Dorsolateral prefrontal cortex (tissue), 120 donors: ENCODE measurements at regions of chr1 and their contacts with region 1.

Region 1: DNA sequence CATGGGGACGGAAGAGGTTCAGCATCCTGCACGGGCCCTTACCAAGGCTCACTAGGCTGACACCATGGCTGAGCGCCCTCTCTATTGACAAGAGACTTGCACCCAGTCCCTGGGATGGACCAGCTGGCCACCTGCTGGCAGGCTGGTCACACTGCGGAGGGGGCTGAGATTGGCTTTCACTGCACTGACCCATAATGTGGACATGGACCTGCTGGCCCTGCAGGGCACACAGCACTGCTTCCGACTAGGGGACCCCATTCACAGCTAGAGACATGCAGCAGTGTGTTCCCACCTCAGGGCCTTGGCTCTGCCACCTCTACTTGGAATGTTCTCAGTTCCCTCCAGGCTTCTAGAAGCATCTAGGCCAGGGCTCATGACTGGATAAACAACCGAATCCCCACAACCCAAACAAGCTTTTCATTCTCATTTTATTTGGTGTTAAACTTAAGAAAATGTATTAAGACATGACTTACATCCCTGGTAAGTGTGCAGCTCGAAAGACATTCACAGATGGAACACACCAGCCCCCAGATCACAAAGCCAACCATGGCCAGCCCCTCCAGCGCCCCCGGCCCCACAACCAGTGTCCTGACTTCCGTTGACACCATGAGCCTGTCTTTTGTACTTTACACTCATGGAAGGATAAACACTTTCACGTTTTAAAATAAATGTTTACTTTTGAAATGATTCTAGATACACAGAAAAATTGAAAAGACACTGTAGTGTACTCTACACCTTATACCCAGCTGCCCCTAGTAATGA is 9.3 kb upstream of the SRARP start:
- DNase-seq: peak in 9 of 10 donors; percentile 56 to 88 (median 74)
- H3K4me3 ChIP-seq: no peak overlapping the region
- H3K27ac ChIP-seq: peak overlapping the region in 3 of 59 donors; percentile 27 to 51 (median 45)
- H3K27me3 ChIP-seq: no peaks in the 10 kb centered on the region
- CTCF ChIP-seq: peak; percentile 36 to 97 (median 80)

Region 2: GRCh38 chr1:15816674-15817073 is 178.1 kb before region 1 on chr1:
- intact Hi-C with region 1: loop called in 1 of 2 experiments (anchors 5 kb)
- DNase-seq: no peak
- H3K4me3 ChIP-seq: no peak overlapping the region
- H3K27ac ChIP-seq: no peak overlapping the region
- H3K27me3 ChIP-seq: no peaks in the 10 kb centered on the region
- CTCF ChIP-seq: no peak

Region 3: DNA sequence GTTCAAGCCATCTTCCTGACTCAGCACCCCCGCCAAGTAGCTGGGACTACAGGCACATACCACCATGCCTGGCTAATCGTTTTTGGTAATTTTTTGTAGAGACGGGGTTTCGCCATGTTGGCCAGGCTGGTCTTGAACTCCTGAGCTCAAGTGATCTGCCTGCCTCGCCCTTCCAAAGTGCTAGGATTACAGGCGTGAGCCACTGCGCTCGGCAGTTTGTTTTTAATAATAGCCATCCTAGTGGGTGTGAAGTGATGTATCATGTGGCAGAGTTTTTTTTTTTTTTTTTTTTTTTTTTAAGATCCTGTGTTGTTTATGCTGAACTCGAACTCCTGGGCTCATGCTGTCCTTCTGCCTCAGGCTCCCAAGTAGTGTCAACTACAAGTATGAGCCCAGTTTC is 95.5 kb before region 1 on chr1:
- intact Hi-C with region 1: loop called in 1 of 2 experiments (anchors 10 kb)
- DNase-seq: no peak
- H3K4me3 ChIP-seq: no peak overlapping the region
- H3K27ac ChIP-seq: peak overlapping the region in 5 of 59 donors; percentile 15 to 39 (median 26)
- H3K27me3 ChIP-seq: no peaks in the 10 kb centered on the region
- CTCF ChIP-seq: no peak

Region 4: GRCh38 chr1:16111771-16112595 is 117.2 kb after region 1 on chr1:
- intact Hi-C with region 1: no loop called
- DNase-seq: no peak
- H3K4me3 ChIP-seq: no peak overlapping the region
- H3K27ac ChIP-seq: no peak overlapping the region
- H3K27me3 ChIP-seq: peaks cover 0 to 8% (median 0%) of the 10 kb centered on the region in 45 donors
- CTCF ChIP-seq: no peak